ENCODE measurements at regions of chr1 and their contacts with region 1.

Region 1: DNA sequence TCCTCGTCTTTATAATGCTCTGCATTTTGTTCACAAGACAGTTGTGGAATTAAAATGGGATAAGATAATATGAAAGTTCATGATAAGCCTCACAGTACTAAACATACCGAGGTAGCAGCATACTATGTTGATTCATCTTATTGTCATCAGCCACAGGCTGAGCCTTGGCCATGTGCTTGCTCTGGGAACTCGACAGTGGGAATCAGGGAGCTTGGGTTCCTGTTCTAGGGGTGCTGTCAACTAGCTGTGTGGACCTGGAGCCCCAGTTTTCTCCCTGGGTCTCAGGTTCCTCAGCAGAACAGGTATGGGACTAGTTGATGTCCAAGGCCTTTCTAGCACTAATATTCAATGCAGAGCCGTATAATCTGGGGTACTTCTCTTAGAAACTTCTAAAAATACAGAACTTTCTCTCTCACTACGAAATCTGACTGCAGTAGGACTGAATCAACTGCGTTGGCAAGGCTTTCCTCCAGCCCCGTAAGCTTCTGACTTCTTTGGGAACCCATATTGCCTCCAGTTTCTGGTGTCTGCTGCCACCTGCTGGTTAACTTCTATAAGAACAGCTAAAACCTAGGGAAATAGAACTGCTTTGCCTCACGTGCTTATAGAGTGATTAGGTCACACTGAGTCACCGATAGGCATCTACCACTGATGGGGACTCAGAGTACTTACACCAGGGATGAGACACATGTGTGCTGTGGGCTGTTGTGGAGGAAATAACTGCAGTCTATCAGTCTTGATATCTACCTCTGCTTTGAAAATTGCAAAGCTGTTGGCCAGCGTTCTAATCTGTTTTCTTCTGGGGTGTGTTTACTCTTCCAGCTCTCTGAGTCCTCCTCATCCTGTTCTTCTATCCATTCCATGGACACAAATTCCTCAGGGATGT is 110.9 kb downstream of the RGL1 start:
- DNase-seq: no peak
- ATAC-seq: peak; percentile 94
- H3K4me3 ChIP-seq: no peak overlapping the region
- H3K27ac ChIP-seq: peak overlapping the region; percentile 32
- H3K4me1 ChIP-seq: peaks cover 28% of the 10 kb centered on the region
- H3K27me3 ChIP-seq: no peaks in the 10 kb centered on the region
- CTCF ChIP-seq: peak; percentile 85

Region 2: GRCh38 chr1:183655562-183656075 is 260.2 kb before region 1 on chr1:
- intact Hi-C with region 1: loop called (anchors 10 kb)
- DNase-seq: peak; percentile 75
- ATAC-seq: peak; percentile 96
- H3K4me3 ChIP-seq: no peak overlapping the region
- H3K27ac ChIP-seq: no peak overlapping the region
- H3K4me1 ChIP-seq: peaks cover 28% of the 10 kb centered on the region
- H3K27me3 ChIP-seq: no peaks in the 10 kb centered on the region
- CTCF ChIP-seq: peak; percentile 90

Region 3: GRCh38 chr1:183827801-183828200 is 88.1 kb before region 1 on chr1:
- intact Hi-C with region 1: no loop called
- DNase-seq: no peak
- ATAC-seq: no peak
- H3K4me3 ChIP-seq: no peak overlapping the region
- H3K27ac ChIP-seq: no peak overlapping the region
- H3K4me1 ChIP-seq: peaks cover 18% of the 10 kb centered on the region
- H3K27me3 ChIP-seq: no peaks in the 10 kb centered on the region
- CTCF ChIP-seq: no peak

Region 4: GRCh38 chr1:183989078-183989577 is 73.3 kb after region 1 on chr1:
- intact Hi-C with region 1: no loop called
- DNase-seq: no peak
- ATAC-seq: peak; percentile 66
- H3K4me3 ChIP-seq: no peak overlapping the region
- H3K27ac ChIP-seq: no peak overlapping the region
- H3K4me1 ChIP-seq: no peaks in the 10 kb centered on the region
- H3K27me3 ChIP-seq: no peaks in the 10 kb centered on the region
- CTCF ChIP-seq: no peak

Measured in upper lobe of right lung (tissue), 1 donor.